ENCODE measurements at regions of chr9 and their contacts with region 1.

Region 1: DNA sequence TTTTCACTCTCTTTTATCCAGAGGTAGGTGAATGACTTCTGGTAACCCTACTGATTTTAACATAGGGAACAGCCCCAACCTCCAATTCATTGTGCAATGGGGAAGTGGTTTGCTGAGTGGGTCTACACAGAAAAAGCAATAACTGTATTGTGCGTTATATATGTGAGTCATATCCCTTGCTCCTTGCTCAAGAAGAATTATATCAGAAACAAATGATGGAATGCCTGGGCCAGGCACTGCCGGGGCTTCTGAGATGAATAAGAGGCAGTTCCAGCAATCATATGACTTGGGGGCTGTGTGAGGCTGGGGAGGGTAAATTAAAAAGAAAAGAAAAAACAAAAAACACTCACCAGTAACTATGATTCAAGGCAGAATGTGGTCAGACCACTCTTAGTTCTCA is 79.2 kb upstream of the ABCA1 start:
- DNase-seq: peak in 6 of 7 donors; percentile 35 to 66 (median 44)
- H3K4me3 ChIP-seq: no peak overlapping the region
- H3K27ac ChIP-seq: peak overlapping the region in 3 of 5 donors; percentile 35 to 73 (median 61)
- H3K4me1 ChIP-seq: peaks cover 0 to 10% of the 10 kb centered on the region in 2 donors
- H3K27me3 ChIP-seq: no peaks in the 10 kb centered on the region
- CTCF ChIP-seq: no peak
- POLR2A ChIP-seq: no peak

Region 2: DNA sequence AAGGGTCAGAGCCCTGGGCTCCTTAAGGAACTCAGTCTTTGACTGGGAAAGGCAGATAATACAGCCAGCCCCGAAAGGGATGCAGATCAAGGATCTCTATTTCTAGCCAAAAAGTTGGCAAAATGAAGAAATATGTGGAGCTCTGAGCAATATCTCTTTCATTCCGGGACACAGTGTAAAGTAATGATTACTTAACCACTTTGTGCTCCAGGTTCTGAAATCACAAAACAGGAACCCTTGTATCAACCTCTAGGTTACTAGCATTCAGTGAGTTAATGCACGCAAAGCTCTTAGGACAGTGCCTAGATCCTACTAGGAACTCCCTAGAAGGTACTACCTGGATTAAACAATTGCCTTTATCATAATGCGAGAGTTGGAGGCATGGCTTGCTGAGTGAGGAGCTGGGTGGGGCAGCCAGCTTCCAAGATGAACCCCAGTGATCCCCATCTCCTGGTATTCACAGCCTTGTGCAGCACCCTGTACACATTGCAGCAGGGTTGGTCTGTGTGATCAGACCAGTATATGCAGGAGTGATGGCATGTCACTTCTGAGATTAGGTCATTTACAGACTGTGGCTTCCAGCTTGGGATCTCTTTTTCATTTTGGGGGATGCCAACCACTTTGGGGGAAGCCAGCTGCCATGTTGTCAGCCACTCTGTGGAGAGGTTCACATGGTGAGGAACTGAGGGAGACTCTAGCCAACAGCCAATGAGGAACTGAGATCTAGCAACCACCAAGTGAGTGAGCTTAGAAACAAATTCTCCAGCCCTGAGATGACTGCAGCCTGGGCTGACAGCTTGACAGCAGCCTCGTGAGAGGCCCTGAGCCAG is 134.2 kb after region 1 on chr9:
- intact Hi-C with region 1: loop called in 1 of 2 experiments (anchors 10 kb)
- DNase-seq: peak in 2 of 7 donors; percentile 29 to 45
- H3K4me3 ChIP-seq: no peak overlapping the region
- H3K27ac ChIP-seq: no peak overlapping the region
- H3K4me1 ChIP-seq: no peaks in the 10 kb centered on the region
- H3K27me3 ChIP-seq: no peaks in the 10 kb centered on the region
- CTCF ChIP-seq: no peak
- POLR2A ChIP-seq: no peak

Measured in adrenal gland (tissue), 19 donors.